Esophagus muscularis mucosa (tissue), 4 donors: ENCODE measurements at regions of chr15 and their contacts with region 1.

Region 1: DNA sequence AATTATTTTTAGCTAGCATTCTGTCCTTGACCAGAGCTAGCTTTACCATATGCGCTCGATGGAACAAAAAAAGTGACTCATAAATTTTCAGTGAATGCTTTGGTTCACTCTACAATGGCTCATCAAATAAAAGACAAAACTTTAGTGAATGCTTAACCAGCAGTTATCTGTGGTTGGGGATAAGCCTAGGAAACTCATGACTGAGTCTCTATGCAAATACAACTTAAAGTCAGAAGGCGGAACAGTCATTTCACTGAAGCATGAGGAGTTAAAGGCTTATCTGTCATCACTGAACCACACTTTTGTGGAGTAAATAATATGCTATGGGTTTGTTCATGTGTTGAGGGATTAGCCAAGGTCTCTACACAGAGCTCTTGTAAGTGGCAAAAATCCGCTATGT is 308.4 kb downstream of the SQOR start:
- DNase-seq: no peak
- H3K4me3 ChIP-seq: no peak overlapping the region
- H3K27ac ChIP-seq: no peak overlapping the region
- H3K4me1 ChIP-seq: no peaks in the 10 kb centered on the region
- H3K27me3 ChIP-seq: no peaks in the 10 kb centered on the region
- CTCF ChIP-seq: no peak
- EP300 ChIP-seq: no peak
- POLR2A ChIP-seq: no peak

Region 2: DNA sequence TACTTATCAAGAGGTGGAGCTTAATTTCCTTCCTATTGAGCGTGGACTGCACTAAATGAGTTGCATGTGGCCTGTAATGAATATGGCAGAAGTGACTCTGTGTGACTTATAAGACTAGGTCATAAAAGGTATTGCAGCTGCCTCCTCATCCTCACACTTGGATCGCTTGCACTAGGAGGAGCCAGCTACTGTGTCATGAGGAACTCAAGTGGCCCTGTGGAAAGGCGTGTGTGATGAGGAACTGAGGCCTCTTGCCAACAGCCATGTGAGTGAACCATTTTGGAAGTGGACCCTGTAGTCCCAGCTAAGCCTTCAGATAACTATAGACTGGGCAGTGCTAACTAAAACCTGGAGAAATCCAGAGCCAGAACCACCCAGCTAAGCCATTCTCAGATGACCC is 413.6 kb before region 1 on chr15:
- intact Hi-C with region 1: no loop called
- DNase-seq: no peak
- H3K4me3 ChIP-seq: no peak overlapping the region
- H3K27ac ChIP-seq: no peak overlapping the region
- H3K4me1 ChIP-seq: no peaks in the 10 kb centered on the region
- H3K27me3 ChIP-seq: no peaks in the 10 kb centered on the region
- CTCF ChIP-seq: no peak
- EP300 ChIP-seq: no peak
- POLR2A ChIP-seq: no peak

Region 3: GRCh38 chr15:45993508-45993907 is 50.3 kb after region 1 on chr15:
- intact Hi-C with region 1: loop called (anchors 5 kb)
- DNase-seq: no peak
- H3K4me3 ChIP-seq: no peak overlapping the region
- H3K27ac ChIP-seq: no peak overlapping the region
- H3K4me1 ChIP-seq: no peaks in the 10 kb centered on the region
- H3K27me3 ChIP-seq: no peaks in the 10 kb centered on the region
- CTCF ChIP-seq: no peak
- EP300 ChIP-seq: no peak
- POLR2A ChIP-seq: no peak